Activated T-helper 1 cell treated with anti-CD3 and anti-CD28 coated beads, Interleukin-12 subunit alpha, Interleukin-12 subunit beta, Interleukin-2, Interleukin-4 antibody, amounts not matched to agents 30 ng/mL and 10 ng/mL and 1 ng/mL, durations not matched to agents 14 hours and 24 hours and 36 hours (primary cell): ENCODE measurements at regions of chr1 and their contacts with region 1.

Region 1: GRCh38 chr1:32521165-32521564 is 18.1 kb upstream of the ZBTB8A start:
- DNase-seq: no peak
- H3K4me3 Mint-ChIP-seq: peak overlapping the region; percentile 50
- H3K27ac Mint-ChIP-seq: peak overlapping the region; percentile 20
- H3K4me1 Mint-ChIP-seq: peaks cover 5% of the 10 kb centered on the region
- H3K27me3 Mint-ChIP-seq: peaks cover 7% of the 10 kb centered on the region

Region 2: GRCh38 chr1:32339363-32339978 is 181.7 kb before region 1 on chr1:
- intact Hi-C with region 1: no loop called
- DNase-seq: no peak
- H3K4me3 Mint-ChIP-seq: no peak overlapping the region
- H3K27ac Mint-ChIP-seq: no peak overlapping the region
- H3K4me1 Mint-ChIP-seq: peaks cover 46% of the 10 kb centered on the region
- H3K27me3 Mint-ChIP-seq: peaks cover 4% of the 10 kb centered on the region

Region 3: DNA sequence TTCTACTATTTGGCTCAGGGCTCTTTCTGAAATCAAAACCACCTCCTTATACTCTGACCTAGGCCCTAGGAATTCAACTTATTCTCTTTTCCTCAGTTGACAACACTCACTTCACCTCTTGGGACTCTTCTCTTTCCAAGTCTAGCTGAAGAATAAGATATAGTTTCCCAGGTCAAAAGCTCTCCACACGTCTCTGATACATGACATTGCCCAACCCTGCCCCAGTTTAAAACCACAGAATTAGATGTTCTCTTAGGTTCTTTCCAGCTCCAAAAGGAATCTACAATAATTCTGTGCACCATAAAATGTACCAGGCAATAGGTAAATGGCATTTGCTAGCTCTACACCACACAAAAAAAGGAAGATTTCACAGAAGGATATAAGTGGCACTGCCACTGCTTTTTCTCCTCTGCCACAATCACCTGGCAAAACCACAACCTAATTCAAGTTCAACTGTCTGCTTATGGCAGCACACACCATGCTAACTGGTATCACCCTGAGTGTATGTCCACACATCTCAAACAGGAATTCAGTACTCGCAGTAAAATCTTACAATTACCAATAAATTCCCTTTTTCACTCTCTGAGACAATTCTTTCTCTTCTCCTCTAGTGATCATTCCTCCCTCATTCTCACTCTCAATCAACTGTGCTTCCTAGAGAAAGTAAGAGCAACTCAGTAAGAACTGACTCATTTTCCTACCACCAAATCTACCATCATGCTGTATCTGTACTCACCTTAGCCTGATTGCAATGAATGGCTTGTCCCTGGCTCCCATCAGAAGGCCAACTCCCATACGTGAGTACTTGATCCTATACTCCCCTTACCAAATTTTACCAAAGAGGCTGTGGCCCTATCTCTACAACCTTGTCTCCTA is 101.9 kb after region 1 on chr1:
- intact Hi-C with region 1: loop called (anchors 1 kb)
- DNase-seq: no peak
- H3K4me3 Mint-ChIP-seq: no peak overlapping the region
- H3K27ac Mint-ChIP-seq: peak overlapping the region; percentile 64
- H3K4me1 Mint-ChIP-seq: peaks cover 38% of the 10 kb centered on the region
- H3K27me3 Mint-ChIP-seq: no peaks in the 10 kb centered on the region

Region 4: GRCh38 chr1:32828341-32828740 is 307.2 kb after region 1 on chr1:
- intact Hi-C with region 1: no loop called
- DNase-seq: no peak
- H3K4me3 Mint-ChIP-seq: no peak overlapping the region
- H3K27ac Mint-ChIP-seq: no peak overlapping the region
- H3K4me1 Mint-ChIP-seq: peaks cover 27% of the 10 kb centered on the region
- H3K27me3 Mint-ChIP-seq: no peaks in the 10 kb centered on the region